BJ (cell line): ENCODE measurements at regions of chr10 and their contacts with region 1.

Region 1: DNA sequence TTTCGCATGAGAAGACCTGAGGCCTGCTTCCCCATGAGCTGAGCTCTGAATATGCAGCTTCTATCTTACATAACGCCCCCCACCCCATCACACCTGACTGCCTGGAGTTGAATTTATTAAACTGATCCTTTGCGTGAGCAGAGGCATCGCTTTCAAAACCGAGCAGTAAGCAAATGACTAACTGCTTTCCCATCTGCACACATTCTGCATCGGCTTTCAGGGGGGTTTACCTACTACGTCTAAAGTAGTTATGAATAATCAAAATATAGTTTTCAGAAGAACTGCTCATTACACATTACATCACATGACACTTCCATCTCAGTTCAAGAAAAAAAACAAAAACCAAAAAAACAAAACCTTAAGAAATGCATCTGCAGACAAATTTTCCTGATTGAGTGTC is 54.7 kb upstream of the EGR2 start:
- DNase-seq: no peak
- H3K4me3 ChIP-seq: no peak overlapping the region
- H3K27me3 ChIP-seq: no peaks in the 10 kb centered on the region
- CTCF ChIP-seq: no peak

Region 2: DNA sequence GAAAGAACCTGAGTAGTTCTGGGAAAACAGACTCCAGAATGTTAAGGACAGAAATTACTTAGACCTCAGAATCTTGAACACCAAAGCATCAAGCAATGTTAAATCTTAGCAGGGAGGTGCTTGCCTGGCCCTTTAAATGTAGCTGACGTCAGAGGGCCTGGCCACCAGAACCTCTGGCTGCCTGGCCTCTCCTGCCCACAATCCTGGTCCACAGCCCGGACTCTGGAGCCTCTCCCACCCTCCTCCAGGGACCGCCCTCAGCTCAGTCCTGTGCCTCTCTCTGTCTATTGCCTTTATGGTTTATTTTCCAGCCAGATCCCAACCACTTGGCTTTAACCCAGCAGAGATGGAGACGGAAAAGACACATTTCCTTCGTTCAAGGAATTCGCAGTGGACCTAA is 12.5 kb before region 1 on chr10:
- CTCF ChIA-PET with region 1: interaction called, 3 read pairs
- POLR2A ChIA-PET with region 1: interaction called, 11 read pairs
- DNase-seq: no peak
- H3K4me3 ChIP-seq: no peak overlapping the region
- H3K27me3 ChIP-seq: peaks cover 2% of the 10 kb centered on the region
- CTCF ChIP-seq: no peak

Region 3: DNA sequence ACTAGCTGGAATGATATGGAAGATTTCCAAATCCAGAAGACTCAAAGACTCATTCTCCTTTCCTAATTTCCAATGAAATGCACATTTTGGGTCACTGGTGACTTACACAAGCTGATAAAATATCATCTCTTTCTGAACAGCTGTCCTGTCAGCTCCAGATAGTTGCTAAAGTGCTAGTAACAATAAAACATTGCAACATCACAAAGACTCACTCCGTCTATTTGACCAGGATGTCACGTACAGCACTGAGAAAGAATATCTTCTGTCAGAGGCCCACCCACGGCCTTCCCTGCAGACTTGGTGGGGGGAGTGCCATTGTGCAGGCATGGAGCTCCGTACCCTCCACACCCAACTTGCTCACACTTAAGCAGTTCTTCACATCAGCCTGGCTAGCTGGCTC is 24.2 kb after region 1 on chr10:
- CTCF ChIA-PET with region 1: no interaction called
- POLR2A ChIA-PET with region 1: no interaction called
- DNase-seq: peak; percentile 26
- H3K4me3 ChIP-seq: no peak overlapping the region
- H3K27me3 ChIP-seq: 0 out of 2 replicates have a peak, but pooled peaks cover 3% of the 10 kb centered on the region
- CTCF ChIP-seq: no peak